ENCODE measurements at regions of chr2 and their contacts with region 1.

Region 1: GRCh38 chr2:88711903-88712302 is 20.4 kb downstream of the RPIA start:
- DNase-seq: peak in 1 of 2 experiments; percentile 58
- H3K4me3 ChIP-seq: no peak overlapping the region
- H3K27ac ChIP-seq: no peak overlapping the region
- H3K4me1 ChIP-seq: peaks cover 36% of the 10 kb centered on the region
- H3K27me3 ChIP-seq: no peaks in the 10 kb centered on the region
- CTCF ChIP-seq: no peak

Region 2: DNA sequence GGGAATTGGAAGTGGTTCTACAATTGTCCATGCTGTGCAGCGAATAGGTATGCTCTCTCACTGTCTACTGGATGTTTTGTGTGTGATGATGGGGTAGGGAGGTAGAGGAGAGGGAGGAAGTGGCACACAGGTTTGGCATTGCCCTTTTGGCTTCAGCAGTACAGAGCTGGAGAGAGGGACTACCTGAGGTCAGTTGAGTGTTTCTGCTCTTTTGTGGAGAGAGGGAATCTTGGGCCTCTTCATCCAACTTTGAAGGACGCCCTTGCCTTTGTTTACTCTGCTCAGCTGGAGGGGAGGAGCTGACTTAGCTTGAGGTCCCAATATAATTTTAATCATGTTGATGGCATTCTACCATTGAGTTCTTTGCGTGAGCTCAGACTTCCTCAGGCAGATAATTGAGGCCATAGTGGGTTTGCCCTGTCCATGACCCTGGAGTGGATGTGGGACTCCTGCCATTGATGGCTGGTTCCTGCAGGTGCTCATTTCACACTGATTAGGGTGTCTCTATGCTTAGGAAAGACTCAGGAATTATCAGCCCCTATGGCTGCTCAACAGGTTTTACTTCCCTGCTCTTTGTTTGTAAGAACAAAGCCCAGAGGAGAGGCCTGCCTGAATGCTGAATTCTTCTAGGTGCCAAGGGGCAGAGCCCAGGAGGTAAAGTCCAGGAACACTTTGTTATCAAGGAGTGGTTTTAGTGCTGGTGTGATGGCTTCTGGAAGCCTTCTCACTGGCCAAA is 13.2 kb before region 1 on chr2:
- CTCF ChIA-PET with region 1: no interaction called
- POLR2A ChIA-PET with region 1: interaction called, 6 read pairs
- intact Hi-C with region 1: loop called (anchors 2 kb)
- DNase-seq: peak; percentile 57 to 79
- H3K4me3 ChIP-seq: no peak overlapping the region
- H3K27ac ChIP-seq: 0 out of 2 replicates have a peak overlapping the region, but pooled peaks have one; percentile 19
- H3K4me1 ChIP-seq: peaks cover 12% of the 10 kb centered on the region; the same call in 1 of the 2 replicates
- H3K27me3 ChIP-seq: no peaks in the 10 kb centered on the region
- CTCF ChIP-seq: no peak

Region 3: DNA sequence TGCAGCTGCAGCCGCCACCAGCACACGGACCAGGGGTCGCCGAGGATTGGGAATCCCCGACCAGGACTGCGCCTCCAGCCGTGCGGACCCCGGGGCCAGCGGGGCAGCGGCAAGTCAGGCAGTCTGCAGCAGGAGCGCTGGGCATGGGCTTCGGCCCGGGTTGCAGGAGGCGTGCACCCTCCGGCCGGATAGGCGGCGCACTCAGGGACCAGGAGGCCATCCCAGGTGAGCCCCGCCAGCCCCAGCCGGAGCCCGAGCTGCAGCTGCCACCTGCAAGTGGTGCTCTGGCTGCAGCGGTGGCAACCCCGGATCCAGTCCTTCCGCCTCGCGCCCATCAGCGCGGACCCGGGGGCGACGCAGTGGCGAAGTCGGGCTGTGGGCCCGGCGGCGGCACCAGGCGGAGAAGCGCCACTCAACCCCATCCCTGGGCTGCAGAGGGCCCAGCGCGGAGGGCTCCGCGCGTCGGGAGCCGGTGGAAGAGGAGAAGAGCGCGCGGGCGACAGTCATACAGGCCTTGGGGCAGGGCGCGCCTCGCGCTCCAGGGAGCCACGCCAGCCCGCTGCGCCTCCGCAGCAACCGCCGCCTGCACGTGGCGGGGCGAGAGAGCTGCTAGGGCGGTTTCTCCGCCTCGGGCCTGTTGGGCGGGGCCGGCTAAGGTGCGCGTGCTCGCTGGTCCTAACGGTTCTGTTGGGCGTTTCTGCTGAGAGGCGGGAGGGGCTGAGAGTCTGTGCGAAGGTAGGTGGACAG is 53.4 kb after region 1 on chr2:
- CTCF ChIA-PET with region 1: no interaction called
- POLR2A ChIA-PET with region 1: no interaction called
- intact Hi-C with region 1: no loop called
- DNase-seq: no peak
- H3K4me3 ChIP-seq: no peak overlapping the region
- H3K27ac ChIP-seq: no peak overlapping the region
- H3K4me1 ChIP-seq: no peaks in the 10 kb centered on the region
- H3K27me3 ChIP-seq: no peaks in the 10 kb centered on the region
- CTCF ChIP-seq: no peak

Region 4: DNA sequence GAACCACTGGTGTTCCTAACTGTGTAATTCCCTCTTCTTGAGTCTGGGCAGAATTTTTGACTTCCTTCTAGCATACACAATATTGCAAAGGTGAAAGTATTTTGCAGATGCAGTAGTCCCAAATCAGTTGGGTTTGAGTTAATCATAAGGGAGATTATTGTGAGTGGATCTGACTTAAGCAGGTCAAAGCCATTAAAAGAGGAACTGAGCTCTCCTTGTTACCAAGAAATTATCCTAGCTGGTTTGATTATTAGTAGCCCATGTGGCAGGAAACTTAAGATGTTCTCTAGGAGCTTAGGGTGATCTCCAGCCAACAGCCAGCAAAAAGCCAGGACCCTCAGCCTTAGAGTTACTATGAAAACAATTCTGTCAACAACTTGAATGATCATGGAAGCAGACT is 201.4 kb after region 1 on chr2:
- CTCF ChIA-PET with region 1: no interaction called
- POLR2A ChIA-PET with region 1: no interaction called
- intact Hi-C with region 1: no loop called
- DNase-seq: no peak
- H3K4me3 ChIP-seq: no peak overlapping the region
- H3K27ac ChIP-seq: no peak overlapping the region
- H3K4me1 ChIP-seq: no peaks in the 10 kb centered on the region
- H3K27me3 ChIP-seq: 0 out of 2 replicates have a peak, but pooled peaks cover 6% of the 10 kb centered on the region
- CTCF ChIP-seq: no peak